ENCODE measurements at regions of chr14 and their contacts with region 1.

Region 1: GRCh38 chr14:58617619-58618018 is 20.1 kb upstream of the DACT1 start:
- DNase-seq: no peak
- H3K4me3 ChIP-seq: no peak overlapping the region
- H3K27ac ChIP-seq: no peak overlapping the region
- H3K4me1 ChIP-seq: no peaks in the 10 kb centered on the region
- H3K27me3 ChIP-seq: no peaks in the 10 kb centered on the region
- CTCF ChIP-seq: no peak

Region 2: GRCh38 chr14:57671021-57671420 is 946.6 kb before region 1 on chr14:
- CTCF ChIA-PET with region 1: no interaction called
- POLR2A ChIA-PET with region 1: interaction called, 30 read pairs
- intact Hi-C with region 1: no loop called
- DNase-seq: no peak
- H3K4me3 ChIP-seq: no peak overlapping the region
- H3K27ac ChIP-seq: no peak overlapping the region
- H3K4me1 ChIP-seq: no peaks in the 10 kb centered on the region
- H3K27me3 ChIP-seq: 0 out of 2 replicates have a peak, but pooled peaks cover 4% of the 10 kb centered on the region
- CTCF ChIP-seq: no peak

Region 3: DNA sequence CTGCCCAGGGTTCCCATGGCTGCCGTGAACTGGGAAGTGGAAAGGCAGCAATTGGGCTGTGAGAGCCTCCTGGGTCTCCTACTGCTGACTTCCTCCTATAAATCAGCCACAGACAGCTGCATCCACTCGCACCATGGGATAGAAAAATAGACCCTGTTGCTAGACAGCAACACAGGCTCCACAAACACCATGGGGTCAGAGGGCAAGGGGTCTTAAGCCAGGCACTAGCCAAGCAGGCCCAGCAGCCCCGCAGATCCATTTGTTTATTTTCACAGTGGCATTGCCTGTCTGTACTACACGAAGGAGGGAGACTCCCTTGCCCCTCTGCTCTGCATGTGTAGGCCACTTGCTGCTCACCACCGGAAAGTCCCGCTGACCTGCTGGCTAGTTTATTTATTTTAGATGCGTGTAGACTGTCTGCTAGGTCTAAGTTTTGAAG is 159.9 kb after region 1 on chr14:
- CTCF ChIA-PET with region 1: no interaction called
- POLR2A ChIA-PET with region 1: no interaction called
- intact Hi-C with region 1: no loop called
- DNase-seq: no peak
- H3K4me3 ChIP-seq: no peak overlapping the region
- H3K27ac ChIP-seq: no peak overlapping the region
- H3K4me1 ChIP-seq: no peaks in the 10 kb centered on the region
- H3K27me3 ChIP-seq: peaks cover 67% of the 10 kb centered on the region
- CTCF ChIP-seq: no peak

Measured in PC-9 (cell line).